ENCODE measurements at regions of chr16 and their contacts with region 1.

Region 1: DNA sequence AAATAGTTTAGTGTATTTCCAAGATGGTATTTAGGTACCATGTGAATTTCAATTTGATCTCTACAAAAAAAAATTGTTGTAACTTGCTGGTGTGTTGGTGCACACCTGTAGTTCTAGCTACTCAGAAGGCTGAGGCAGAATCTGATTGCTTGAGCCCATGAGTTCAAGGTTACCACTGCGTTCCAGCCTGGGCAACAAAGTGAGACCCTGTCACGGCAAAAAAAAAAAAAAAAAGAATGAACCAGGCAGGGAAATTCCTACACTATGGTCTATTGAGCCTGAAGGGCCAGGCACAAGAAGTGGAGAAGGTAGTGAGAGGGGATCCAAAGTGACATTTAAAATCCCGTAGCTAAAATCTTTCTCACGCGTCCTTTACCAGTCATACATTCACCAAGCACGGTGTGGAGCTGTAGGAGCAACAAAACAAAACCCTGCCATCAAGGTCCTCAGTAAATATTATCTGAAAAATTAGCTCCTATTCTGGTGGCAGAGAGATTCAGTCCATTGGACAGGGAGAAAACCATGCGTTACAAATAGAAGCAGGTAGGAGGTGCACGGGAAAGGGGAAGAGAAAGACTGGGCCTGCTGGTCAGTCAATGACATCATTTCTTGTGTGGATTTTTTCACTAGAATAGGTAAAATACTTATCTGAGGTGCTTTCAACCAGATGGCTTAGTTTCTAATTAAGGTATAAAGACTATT is 27.3 kb downstream of the TXNDC11 start:
- DNase-seq: no peak
- ATAC-seq: no peak
- H3K4me3 ChIP-seq: no peak overlapping the region
- H3K27ac ChIP-seq: no peak overlapping the region
- H3K4me1 ChIP-seq: peaks cover 0 to 28% (median 3%) of the 10 kb centered on the region in 9 donors
- H3K27me3 ChIP-seq: no peaks in the 10 kb centered on the region
- CTCF ChIP-seq: no peak

Region 2: DNA sequence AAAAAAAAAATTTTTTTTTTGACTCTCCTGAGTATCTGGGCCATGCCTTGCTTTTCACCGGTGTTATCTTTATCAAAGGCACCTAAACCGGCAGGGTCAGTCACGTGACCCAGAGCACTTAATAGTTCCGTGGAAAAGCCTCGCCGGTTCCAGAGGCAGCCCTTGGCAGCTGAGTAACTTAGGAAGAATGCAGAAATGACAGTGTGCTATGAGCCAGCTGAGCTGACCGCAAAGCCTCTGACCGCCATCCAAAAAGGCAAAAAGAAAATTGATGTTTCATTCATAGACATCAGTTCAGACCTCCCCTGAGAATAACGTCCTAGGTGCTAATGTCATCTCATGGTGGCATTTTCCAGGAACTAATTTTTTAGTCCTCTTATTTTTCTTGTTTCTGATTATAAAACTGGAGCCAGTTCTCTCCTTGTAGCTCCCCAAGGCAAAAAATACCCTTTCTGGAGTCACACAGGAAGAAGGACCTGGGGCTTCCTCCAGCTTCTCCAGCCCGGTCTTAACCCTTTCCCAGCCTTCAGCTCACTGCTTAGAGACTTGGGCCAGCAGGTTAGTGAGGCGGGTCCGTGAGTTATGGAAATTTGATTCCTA is 582.0 kb before region 1 on chr16:
- intact Hi-C with region 1: no loop called
- DNase-seq: peak; percentile 60 to 81
- ATAC-seq: peak; percentile 57 to 78 (median 68)
- H3K4me3 ChIP-seq: no peak overlapping the region
- H3K27ac ChIP-seq: peak overlapping the region in 9 of 10 donors; percentile 21 to 89 (median 65)
- H3K4me1 ChIP-seq: peaks cover 8 to 86% (median 74%) of the 10 kb centered on the region in 9 donors
- H3K27me3 ChIP-seq: no peaks in the 10 kb centered on the region
- CTCF ChIP-seq: no peak

Region 3: DNA sequence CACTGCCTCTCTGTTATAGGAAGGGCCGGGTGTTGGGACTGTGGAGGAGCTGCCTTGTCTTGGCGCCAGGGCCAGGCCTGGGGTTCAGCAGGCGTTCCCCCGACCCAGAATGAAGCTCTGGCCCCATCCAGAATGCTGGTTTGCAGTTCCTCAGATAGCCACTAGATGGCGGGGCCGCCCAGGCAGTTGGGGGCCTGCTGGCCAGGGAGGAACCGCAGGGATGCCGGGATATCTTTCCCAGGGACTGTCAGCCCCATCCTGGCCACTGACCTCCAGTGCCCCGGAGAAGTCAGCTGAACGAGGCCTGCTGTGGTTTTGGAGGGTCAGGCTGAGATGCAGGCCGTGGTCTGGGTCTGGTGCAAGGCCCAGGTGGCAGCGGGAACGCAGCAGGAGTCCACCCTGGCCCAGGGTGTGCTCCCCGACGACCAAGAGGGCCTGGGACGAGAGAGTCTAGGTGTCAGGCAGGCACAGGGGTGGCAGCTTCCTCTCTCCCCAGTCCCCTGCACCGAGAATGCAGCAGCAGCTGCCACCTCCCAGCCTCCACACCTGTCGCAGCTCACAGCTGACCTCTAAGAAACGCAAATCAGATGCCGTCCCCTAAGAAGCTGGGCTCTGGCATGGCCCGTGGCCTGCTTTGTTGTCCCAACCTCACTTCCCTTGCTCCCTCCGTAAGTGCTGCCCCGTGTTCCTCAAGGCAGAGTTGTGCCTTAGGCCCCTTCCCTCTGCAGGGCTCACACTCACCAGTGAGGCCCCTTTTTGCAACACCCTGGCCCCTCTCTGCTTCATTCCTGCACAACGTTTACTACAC is 319.0 kb before region 1 on chr16:
- intact Hi-C with region 1: loop called in 8 of 10 experiments (anchors 5 to 10 kb)
- DNase-seq: peak; percentile 70 to 71
- ATAC-seq: peak; percentile 77 to 87 (median 82)
- H3K4me3 ChIP-seq: no peak overlapping the region
- H3K27ac ChIP-seq: peak overlapping the region in 5 of 10 donors; percentile 13 to 55 (median 45)
- H3K4me1 ChIP-seq: peaks cover 0 to 7% (median 5%) of the 10 kb centered on the region in 9 donors
- H3K27me3 ChIP-seq: no peaks in the 10 kb centered on the region
- CTCF ChIP-seq: peak; percentile 95 to 100 (median 99)

Region 4: GRCh38 chr16:11535471-11535870 is 179.9 kb before region 1 on chr16:
- intact Hi-C with region 1: loop called in 9 of 10 experiments (anchors 2 to 10 kb)
- DNase-seq: no peak
- ATAC-seq: no peak
- H3K4me3 ChIP-seq: no peak overlapping the region
- H3K27ac ChIP-seq: no peak overlapping the region
- H3K4me1 ChIP-seq: peaks cover 0 to 13% (median 0%) of the 10 kb centered on the region in 9 donors
- H3K27me3 ChIP-seq: no peaks in the 10 kb centered on the region
- CTCF ChIP-seq: no peak

Region 5: GRCh38 chr16:11651796-11652195 is 63.6 kb before region 1 on chr16:
- intact Hi-C with region 1: loop called in 2 of 10 experiments (anchors 5 to 10 kb)
- DNase-seq: no peak
- ATAC-seq: no peak
- H3K4me3 ChIP-seq: no peak overlapping the region
- H3K27ac ChIP-seq: no peak overlapping the region
- H3K4me1 ChIP-seq: no peaks in the 10 kb centered on the region
- H3K27me3 ChIP-seq: no peaks in the 10 kb centered on the region
- CTCF ChIP-seq: no peak

Measured in heart right ventricle (tissue), 16 donors.